ENCODE measurements at regions of chr15 and their contacts with region 1.

Region 1: GRCh38 chr15:80105595-80106450 is 46.3 kb downstream of the ZFAND6 start:
- DNase-seq: no peak
- H3K4me3 Mint-ChIP-seq: no peak overlapping the region
- H3K27ac Mint-ChIP-seq: no peak overlapping the region
- H3K4me1 Mint-ChIP-seq: peaks cover 18% of the 10 kb centered on the region
- H3K27me3 Mint-ChIP-seq: no peaks in the 10 kb centered on the region
- CTCF ChIP-seq: no peak

Region 2: DNA sequence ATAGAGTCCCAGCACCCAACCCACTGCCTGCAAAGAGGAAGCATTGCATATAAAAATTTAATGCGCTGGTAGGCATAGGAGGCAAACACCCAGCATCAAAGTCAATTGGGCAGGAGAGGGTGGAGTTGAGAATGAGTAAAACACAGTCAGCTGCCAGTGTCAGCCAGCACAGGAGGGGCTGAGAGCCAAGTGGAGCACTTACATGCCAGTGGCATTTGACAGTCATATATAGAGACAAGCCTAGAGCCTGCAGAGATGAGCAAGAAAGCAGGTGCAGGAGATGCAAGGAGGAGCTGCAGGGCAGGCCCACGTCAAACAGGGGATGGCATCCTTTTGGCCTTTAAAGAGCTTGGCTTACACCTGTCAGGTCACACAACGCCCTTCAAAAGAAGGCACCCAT is 74.0 kb before region 1 on chr15:
- CTCF ChIA-PET with region 1: no interaction called
- intact Hi-C with region 1: no loop called
- DNase-seq: no peak
- H3K4me3 Mint-ChIP-seq: no peak overlapping the region
- H3K27ac Mint-ChIP-seq: no peak overlapping the region
- H3K4me1 Mint-ChIP-seq: peaks cover 28% of the 10 kb centered on the region
- H3K27me3 Mint-ChIP-seq: no peaks in the 10 kb centered on the region
- CTCF ChIP-seq: no peak

Region 3: GRCh38 chr15:80093854-80094418 is 11.9 kb before region 1 on chr15:
- CTCF ChIA-PET with region 1: interaction called, 3 read pairs
- intact Hi-C with region 1: loop called (anchors 1 kb)
- DNase-seq: peak; percentile 11
- H3K4me3 Mint-ChIP-seq: no peak overlapping the region
- H3K27ac Mint-ChIP-seq: no peak overlapping the region
- H3K4me1 Mint-ChIP-seq: peaks cover 23% of the 10 kb centered on the region
- H3K27me3 Mint-ChIP-seq: no peaks in the 10 kb centered on the region
- CTCF ChIP-seq: no peak

Region 4: DNA sequence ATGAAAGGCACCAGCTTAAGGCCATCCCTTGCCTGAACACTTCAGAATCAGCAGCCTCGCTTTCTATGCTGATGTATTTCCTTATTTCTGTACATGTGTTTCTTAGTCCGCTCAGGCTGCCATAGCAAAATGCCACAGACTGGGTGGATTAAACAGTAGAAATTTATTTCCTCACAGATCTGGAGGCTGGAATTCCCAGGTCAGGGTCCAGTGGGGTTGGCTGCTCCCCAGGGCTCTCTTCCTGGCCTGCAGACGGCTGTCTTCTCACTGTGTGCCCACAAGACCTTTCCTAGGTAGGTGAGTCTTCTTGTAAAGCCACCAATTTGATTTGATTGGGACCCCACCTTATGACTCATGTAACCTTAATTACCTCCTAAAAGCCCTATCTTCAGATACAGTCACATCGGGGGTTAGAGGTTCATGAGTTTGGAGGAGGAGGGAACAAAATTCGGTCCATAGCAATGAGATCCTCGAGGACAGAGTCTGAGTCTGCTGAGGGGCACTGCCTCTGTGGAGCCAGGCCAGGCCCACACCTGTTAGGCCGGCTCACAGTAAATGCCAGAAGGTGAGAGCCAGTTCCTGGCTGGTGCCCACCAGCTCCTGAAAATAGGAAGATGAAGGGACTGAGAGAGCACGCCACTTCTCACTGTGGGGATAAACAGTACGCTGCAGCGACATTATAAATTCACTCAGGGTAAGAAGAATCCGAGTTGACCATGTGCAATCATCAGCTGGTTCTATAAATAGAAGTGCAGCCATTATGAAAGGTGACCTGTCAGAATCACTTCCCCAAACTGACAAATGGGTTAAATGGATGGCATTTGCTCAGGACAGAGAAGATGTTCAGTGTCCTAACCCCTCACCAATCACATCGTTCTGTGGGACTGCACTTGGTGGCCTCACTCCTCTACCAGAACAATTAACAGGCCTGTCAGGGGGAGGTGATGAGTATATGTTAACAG is 105.1 kb after region 1 on chr15:
- CTCF ChIA-PET with region 1: no interaction called
- intact Hi-C with region 1: no loop called
- DNase-seq: no peak
- H3K4me3 Mint-ChIP-seq: no peak overlapping the region
- H3K27ac Mint-ChIP-seq: no peak overlapping the region
- H3K4me1 Mint-ChIP-seq: peaks cover 5% of the 10 kb centered on the region
- H3K27me3 Mint-ChIP-seq: peaks cover 44% of the 10 kb centered on the region
- CTCF ChIP-seq: no peak